ENCODE measurements at regions of chr2 and their contacts with region 1.

Region 1: GRCh38 chr2:1550658-1551316 is 137.5 kb downstream of the TPO start:
- DNase-seq: peak; percentile 33
- H3K4me3 ChIP-seq: no peak overlapping the region
- H3K27ac ChIP-seq: no peak overlapping the region
- H3K4me1 ChIP-seq: peaks cover 6% of the 10 kb centered on the region
- H3K27me3 ChIP-seq: no peaks in the 10 kb centered on the region
- CTCF ChIP-seq: peak; percentile 78 to 94

Region 2: DNA sequence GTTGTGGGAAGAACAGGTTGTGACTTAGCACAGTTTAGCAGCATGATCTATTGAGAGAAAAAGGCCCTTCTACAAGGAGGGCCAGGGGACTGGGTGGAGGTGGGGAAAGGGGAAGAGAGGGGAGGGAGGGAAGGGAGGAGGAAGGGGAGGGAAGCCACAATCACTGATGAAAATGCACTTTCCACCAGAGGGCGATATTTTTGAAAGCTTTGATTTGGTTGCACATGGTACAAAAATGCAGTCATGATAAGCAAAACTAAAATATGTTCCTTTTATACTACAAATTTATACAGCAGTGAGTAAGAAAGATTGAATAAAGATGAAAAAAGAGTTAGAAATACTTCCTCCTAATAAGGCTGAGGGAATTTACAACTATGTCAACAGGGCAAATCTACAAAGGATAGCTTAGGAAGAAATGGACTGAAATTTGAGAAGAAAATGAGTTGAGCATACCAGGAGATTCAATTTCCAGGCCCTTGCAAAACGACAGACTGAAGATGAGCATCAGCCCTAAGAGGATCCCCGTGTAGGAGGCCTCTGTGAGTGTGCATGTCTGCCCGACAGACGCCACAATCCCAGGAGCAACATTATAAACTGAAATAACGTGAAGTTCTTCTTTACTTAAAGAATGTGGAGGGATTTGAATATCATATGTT is 1304.2 kb before region 1 on chr2:
- CTCF ChIA-PET with region 1: no interaction called
- dilution Hi-C with region 1: no loop called
- in situ Hi-C with region 1: no loop called
- intact Hi-C with region 1: loop called (anchors 5 kb)
- DNase-seq: peak; percentile 33
- H3K4me3 ChIP-seq: no peak overlapping the region
- H3K27ac ChIP-seq: no peak overlapping the region
- H3K4me1 ChIP-seq: no peaks in the 10 kb centered on the region
- H3K27me3 ChIP-seq: no peaks in the 10 kb centered on the region
- CTCF ChIP-seq: peak; percentile 36 to 64

Region 3: DNA sequence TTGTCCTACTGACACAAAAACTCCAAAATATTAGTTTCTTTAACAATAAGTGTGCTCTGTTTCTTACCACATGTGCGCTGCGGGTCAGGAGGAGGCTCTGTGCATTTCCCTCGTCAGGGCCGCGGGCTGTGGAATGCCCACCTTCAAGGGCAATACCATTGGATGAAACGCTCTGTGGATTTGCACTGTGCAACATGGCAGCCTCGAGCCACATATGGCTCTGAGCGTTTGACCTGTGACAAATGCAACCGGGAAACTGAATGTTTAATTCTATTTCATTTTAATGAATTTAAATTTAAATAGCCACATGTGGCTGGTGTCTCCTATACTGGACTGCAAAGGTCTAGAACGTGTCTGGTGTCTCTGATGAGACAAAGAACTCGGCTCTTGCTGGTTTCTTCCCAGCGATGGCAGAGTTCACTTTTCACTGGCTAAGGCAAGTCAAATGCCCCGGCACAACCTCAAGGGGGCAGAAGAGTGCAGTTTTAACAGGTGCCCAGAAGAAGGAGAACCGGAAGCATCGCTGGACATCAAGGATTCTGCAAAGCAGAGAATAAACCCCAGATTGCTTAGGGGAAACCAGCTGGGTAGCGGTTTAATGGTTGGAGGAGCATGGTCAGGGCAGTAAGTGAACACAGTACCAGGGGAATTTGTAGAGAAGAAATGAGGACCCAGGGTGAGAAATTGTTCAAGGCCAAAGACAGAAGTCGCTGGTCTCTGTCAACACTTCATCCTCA is 836.6 kb before region 1 on chr2:
- CTCF ChIA-PET with region 1: no interaction called
- dilution Hi-C with region 1: no loop called
- in situ Hi-C with region 1: loop called (anchors 10 to 25 kb)
- intact Hi-C with region 1: loop called (anchors 1 kb)
- DNase-seq: peak; percentile 25
- H3K4me3 ChIP-seq: no peak overlapping the region
- H3K27ac ChIP-seq: no peak overlapping the region
- H3K4me1 ChIP-seq: no peaks in the 10 kb centered on the region
- H3K27me3 ChIP-seq: no peaks in the 10 kb centered on the region
- CTCF ChIP-seq: peak; percentile 66 to 76

Region 4: DNA sequence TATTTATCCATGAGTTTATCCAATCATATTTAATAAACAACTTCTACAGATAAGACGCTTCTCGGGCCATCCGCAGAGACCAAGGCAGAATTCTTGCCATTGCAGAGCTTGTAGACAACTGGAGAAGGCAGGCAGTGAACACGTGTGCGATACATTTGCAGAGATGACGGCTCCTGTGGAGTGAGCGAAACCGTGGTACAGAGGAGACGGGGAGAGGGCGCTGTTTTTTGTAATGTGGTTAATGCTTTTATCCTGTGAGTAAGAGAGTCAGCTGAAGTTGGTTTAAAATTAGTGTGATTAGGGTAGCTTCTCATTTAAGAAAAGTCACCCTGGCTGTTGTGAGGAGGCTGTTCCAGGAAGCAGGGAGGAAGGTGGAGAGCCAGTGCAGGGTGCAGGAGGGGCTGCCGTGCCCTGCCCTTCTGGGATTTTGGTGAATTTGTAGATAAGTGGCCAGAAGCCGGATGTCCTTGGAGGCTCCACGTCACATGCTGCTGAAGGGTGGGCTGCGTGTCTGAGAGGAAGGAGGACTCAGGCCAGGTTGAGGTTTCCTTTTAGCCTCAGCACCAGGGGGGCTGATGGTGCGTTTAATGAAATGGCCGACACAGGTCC is 448.7 kb before region 1 on chr2:
- CTCF ChIA-PET with region 1: no interaction called
- dilution Hi-C with region 1: no loop called
- in situ Hi-C with region 1: no loop called
- intact Hi-C with region 1: no loop called
- DNase-seq: no peak
- H3K4me3 ChIP-seq: no peak overlapping the region
- H3K27ac ChIP-seq: no peak overlapping the region
- H3K4me1 ChIP-seq: no peaks in the 10 kb centered on the region
- H3K27me3 ChIP-seq: no peaks in the 10 kb centered on the region
- CTCF ChIP-seq: no peak

Region 5: GRCh38 chr2:1502891-1503304 is 47.9 kb before region 1 on chr2:
- CTCF ChIA-PET with region 1: no interaction called
- dilution Hi-C with region 1: loop called (anchors 5 kb)
- in situ Hi-C with region 1: no loop called
- intact Hi-C with region 1: no loop called
- DNase-seq: no peak
- H3K4me3 ChIP-seq: no peak overlapping the region
- H3K27ac ChIP-seq: no peak overlapping the region
- H3K4me1 ChIP-seq: no peaks in the 10 kb centered on the region
- H3K27me3 ChIP-seq: no peaks in the 10 kb centered on the region
- CTCF ChIP-seq: no peak

Region 6: DNA sequence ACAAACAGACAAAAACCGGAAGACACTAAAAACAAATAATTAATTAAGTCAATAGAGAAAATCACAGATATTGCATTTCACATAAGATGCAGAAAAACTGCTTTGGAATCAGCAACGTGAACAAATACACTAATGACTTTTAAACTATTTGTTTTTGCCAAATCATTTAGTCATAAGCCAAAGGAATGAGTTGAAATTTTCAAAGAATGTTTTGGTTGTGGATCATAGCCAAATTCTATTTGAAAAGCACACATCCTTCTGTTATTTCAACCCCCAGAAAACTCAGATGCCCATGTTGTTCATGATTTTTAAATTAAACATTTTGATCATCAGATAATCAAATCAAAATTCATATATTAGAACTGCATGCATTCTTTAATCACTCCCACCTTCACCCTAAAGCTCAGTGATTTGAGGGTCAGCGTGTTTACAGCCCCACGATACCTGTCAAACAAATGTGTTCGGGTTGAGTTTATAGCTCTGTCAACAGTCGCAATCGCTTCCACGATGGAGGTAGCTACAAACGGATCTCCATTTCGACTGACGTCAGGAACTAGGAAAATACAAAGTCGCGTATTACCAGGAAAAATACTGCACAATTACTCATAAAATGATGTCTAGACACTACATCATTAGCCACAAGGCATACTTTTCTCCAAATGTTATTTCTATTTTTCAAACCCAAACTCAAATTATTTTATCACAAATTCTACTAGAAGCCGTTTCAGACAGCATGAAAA is 103.3 kb after region 1 on chr2:
- CTCF ChIA-PET with region 1: no interaction called
- dilution Hi-C with region 1: no loop called
- in situ Hi-C with region 1: no loop called
- intact Hi-C with region 1: loop called (anchors 2 kb)
- DNase-seq: no peak
- H3K4me3 ChIP-seq: no peak overlapping the region
- H3K27ac ChIP-seq: peak overlapping the region; percentile 60
- H3K4me1 ChIP-seq: peaks cover 31% of the 10 kb centered on the region
- H3K27me3 ChIP-seq: no peaks in the 10 kb centered on the region
- CTCF ChIP-seq: no peak

Region 7: GRCh38 chr2:1717113-1717512 is 166.3 kb after region 1 on chr2:
- CTCF ChIA-PET with region 1: no interaction called
- dilution Hi-C with region 1: no loop called
- in situ Hi-C with region 1: no loop called
- intact Hi-C with region 1: no loop called
- DNase-seq: peak; percentile 99
- H3K4me3 ChIP-seq: no peak overlapping the region
- H3K27ac ChIP-seq: peak overlapping the region; percentile 96
- H3K4me1 ChIP-seq: peaks cover 37% of the 10 kb centered on the region
- H3K27me3 ChIP-seq: no peaks in the 10 kb centered on the region
- CTCF ChIP-seq: no peak

Region 8: DNA sequence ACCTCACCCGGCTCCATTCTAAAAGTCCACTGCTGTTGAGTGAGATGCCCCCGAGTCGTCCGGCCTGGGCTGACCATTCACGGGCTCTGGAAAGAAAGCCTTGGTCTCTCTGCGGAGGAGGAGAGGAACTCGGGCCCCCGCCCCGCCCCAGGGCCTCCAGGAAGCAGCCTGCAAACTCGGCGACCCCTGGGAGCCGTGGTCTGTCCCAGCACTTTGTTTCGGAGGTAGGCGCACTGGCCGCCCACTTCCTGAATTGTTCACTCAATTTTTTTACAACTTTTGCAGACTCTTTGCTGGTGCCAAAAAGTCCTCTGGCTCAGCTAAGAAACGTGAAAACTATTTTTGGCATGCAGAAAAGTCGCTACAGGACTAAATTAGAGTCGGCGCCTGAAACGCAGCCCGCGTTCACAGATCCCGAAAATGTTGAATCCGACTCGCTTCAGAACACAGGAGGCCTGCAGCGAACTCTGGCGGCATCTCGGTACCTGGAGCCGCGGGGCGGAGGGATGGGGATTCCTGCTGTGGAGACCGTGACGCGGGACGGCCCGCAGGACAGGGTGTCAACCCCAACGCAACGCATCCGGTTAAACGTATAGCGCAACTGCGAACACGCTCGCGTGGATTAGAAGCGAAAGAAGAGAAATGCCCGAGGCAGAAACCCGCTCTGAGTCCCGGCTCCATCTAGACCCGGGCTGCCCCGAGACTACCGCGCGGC is 192.1 kb after region 1 on chr2:
- CTCF ChIA-PET with region 1: no interaction called
- dilution Hi-C with region 1: loop called (anchors 5 kb)
- in situ Hi-C with region 1: loop called in 1 of 2 experiments (anchors 10 kb)
- intact Hi-C with region 1: loop called (anchors 1 kb)
- DNase-seq: peak; percentile 90
- H3K4me3 ChIP-seq: peak overlapping the region; percentile 64 to 72 (median 71)
- H3K27ac ChIP-seq: peak overlapping the region; percentile 81
- H3K4me1 ChIP-seq: peaks cover 16% of the 10 kb centered on the region
- H3K27me3 ChIP-seq: no peaks in the 10 kb centered on the region
- CTCF ChIP-seq: peak; percentile 52 to 75

Measured in mammary epithelial cell (primary cell).